CD8-positive, alpha-beta T cell (primary cell): ENCODE measurements at regions of chr14 and their contacts with region 1.

Region 1: GRCh38 chr14:101191721-101192660 is 288.5 kb upstream of the RTL1 start:
- DNase-seq: peak in 1 of 9 experiments; percentile 36
- ATAC-seq: no peak
- H3K4me3 ChIP-seq: no peak overlapping the region
- H3K4me3 Mint-ChIP-seq: no peak overlapping the region
- H3K27ac ChIP-seq: no peak overlapping the region
- H3K27ac Mint-ChIP-seq: no peak overlapping the region
- H3K4me1 ChIP-seq: no peaks in the 10 kb centered on the region
- H3K4me1 Mint-ChIP-seq: no peaks in the 10 kb centered on the region
- H3K27me3 ChIP-seq: no peaks in the 10 kb centered on the region
- H3K27me3 Mint-ChIP-seq: peaks cover 2% of the 10 kb centered on the region
- CTCF ChIP-seq: no peak

Region 2: GRCh38 chr14:101062065-101062450 is 129.9 kb before region 1 on chr14:
- CTCF ChIA-PET with region 1: no interaction called
- POLR2A ChIA-PET with region 1: no interaction called
- intact Hi-C with region 1: no loop called
- DNase-seq: no peak
- ATAC-seq: no peak
- H3K4me3 ChIP-seq: no peak overlapping the region
- H3K4me3 Mint-ChIP-seq: no peak overlapping the region
- H3K27ac ChIP-seq: no peak overlapping the region
- H3K27ac Mint-ChIP-seq: no peak overlapping the region
- H3K4me1 ChIP-seq: no peaks in the 10 kb centered on the region
- H3K4me1 Mint-ChIP-seq: no peaks in the 10 kb centered on the region
- H3K27me3 ChIP-seq: no peaks in the 10 kb centered on the region
- H3K27me3 Mint-ChIP-seq: no peaks in the 10 kb centered on the region
- CTCF ChIP-seq: no peak

Region 3: GRCh38 chr14:101135796-101136742 is 55.9 kb before region 1 on chr14:
- CTCF ChIA-PET with region 1: no interaction called
- POLR2A ChIA-PET with region 1: no interaction called
- intact Hi-C with region 1: loop called in 1 of 2 experiments (anchors 2 kb)
- DNase-seq: no peak
- ATAC-seq: no peak
- H3K4me3 ChIP-seq: no peak overlapping the region
- H3K4me3 Mint-ChIP-seq: no peak overlapping the region
- H3K27ac ChIP-seq: no peak overlapping the region
- H3K27ac Mint-ChIP-seq: no peak overlapping the region
- H3K4me1 ChIP-seq: no peaks in the 10 kb centered on the region
- H3K4me1 Mint-ChIP-seq: no peaks in the 10 kb centered on the region
- H3K27me3 ChIP-seq: no peaks in the 10 kb centered on the region
- H3K27me3 Mint-ChIP-seq: peaks cover 17% of the 10 kb centered on the region
- CTCF ChIP-seq: no peak

Region 4: DNA sequence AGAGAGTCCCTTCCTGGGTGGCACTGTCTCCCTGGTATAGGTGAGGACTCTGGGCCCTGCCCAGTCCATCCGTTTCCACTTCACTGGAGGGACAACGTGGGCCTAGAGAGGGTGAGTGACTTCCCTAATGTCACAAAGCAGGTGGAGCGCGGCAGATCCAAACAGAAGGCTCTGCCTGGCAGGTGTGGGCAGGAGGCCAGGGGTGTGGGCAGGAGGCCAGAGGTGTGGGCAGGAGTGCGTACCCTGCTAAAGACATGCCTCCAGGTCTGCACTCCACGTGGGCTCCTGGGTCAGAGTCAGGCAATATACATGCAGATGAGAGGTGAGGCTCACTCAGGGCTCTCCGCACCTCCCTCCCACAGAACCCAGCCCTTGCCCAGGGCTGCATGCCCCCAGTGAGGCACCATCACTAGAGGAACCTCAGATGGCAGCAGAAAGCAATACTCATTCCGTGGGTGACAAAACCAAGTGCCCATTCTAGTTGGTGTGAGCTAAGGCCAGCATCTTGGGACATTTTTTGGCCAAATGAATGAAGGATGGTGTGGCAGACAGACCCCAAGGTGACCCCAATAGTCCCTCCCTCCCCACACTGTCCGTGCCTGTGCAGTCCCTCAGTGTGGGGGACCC is 16.9 kb before region 1 on chr14:
- CTCF ChIA-PET with region 1: no interaction called
- POLR2A ChIA-PET with region 1: no interaction called
- intact Hi-C with region 1: no loop called
- DNase-seq: peak in 1 of 9 experiments; percentile 40
- ATAC-seq: no peak
- H3K4me3 ChIP-seq: no peak overlapping the region
- H3K4me3 Mint-ChIP-seq: no peak overlapping the region
- H3K27ac ChIP-seq: no peak overlapping the region
- H3K27ac Mint-ChIP-seq: no peak overlapping the region
- H3K4me1 ChIP-seq: no peaks in the 10 kb centered on the region
- H3K4me1 Mint-ChIP-seq: no peaks in the 10 kb centered on the region
- H3K27me3 ChIP-seq: no peaks in the 10 kb centered on the region
- H3K27me3 Mint-ChIP-seq: peaks cover 3% of the 10 kb centered on the region
- CTCF ChIP-seq: no peak

Region 5: DNA sequence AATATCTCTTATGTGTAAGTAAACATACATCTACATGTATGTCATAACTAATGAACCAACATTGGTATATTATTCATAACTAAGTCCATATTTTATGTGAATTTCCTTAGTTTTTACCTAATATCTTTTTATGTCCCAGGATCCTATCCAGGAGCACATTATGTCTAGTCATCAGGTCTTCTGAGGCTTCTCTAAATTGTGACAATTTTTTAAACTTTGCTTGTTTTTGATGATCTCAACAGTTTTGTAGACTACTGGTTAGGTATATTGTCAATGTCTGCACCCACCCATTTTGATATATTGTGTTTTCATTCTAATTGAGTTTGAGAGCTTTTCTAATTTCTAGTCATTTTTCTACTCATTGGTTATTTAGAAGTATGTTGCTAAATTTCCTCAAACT is 81.1 kb after region 1 on chr14:
- CTCF ChIA-PET with region 1: no interaction called
- POLR2A ChIA-PET with region 1: no interaction called
- intact Hi-C with region 1: no loop called
- DNase-seq: no peak
- ATAC-seq: no peak
- H3K4me3 ChIP-seq: no peak overlapping the region
- H3K4me3 Mint-ChIP-seq: no peak overlapping the region
- H3K27ac ChIP-seq: no peak overlapping the region
- H3K27ac Mint-ChIP-seq: no peak overlapping the region
- H3K4me1 ChIP-seq: no peaks in the 10 kb centered on the region
- H3K4me1 Mint-ChIP-seq: no peaks in the 10 kb centered on the region
- H3K27me3 ChIP-seq: no peaks in the 10 kb centered on the region
- H3K27me3 Mint-ChIP-seq: peaks cover 11% of the 10 kb centered on the region
- CTCF ChIP-seq: no peak

Region 6: GRCh38 chr14:101336183-101336582 is 144.2 kb after region 1 on chr14:
- CTCF ChIA-PET with region 1: no interaction called
- POLR2A ChIA-PET with region 1: no interaction called
- intact Hi-C with region 1: no loop called
- DNase-seq: no peak
- ATAC-seq: no peak
- H3K4me3 ChIP-seq: no peak overlapping the region
- H3K4me3 Mint-ChIP-seq: no peak overlapping the region
- H3K27ac ChIP-seq: no peak overlapping the region
- H3K27ac Mint-ChIP-seq: no peak overlapping the region
- H3K4me1 ChIP-seq: no peaks in the 10 kb centered on the region
- H3K4me1 Mint-ChIP-seq: no peaks in the 10 kb centered on the region
- H3K27me3 ChIP-seq: no peaks in the 10 kb centered on the region
- H3K27me3 Mint-ChIP-seq: peaks cover 46% of the 10 kb centered on the region
- CTCF ChIP-seq: no peak